ENCODE measurements at regions of chr5 and their contacts with region 1.

Region 1: DNA sequence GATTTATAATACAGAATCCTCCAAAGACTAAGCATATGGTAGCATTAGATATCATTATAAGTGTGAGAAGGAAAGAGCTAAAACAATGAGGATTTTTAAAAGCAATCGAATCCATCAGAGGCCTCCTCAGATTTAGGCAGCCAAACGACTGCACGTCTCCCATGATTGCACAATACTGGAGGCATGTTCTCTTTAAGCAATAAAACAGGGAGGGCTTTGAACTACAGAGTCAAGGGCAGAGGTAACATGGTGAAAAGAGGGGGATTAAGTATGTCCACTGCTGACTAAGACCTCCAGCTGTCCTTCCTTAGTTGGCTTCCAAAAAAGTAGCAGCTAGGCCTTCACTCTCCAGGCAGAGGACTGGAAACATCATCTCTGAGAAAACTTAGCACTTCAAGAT is 298.7 kb upstream of the RGMB start:
- DNase-seq: no peak
- H3K4me3 ChIP-seq: no peak overlapping the region
- H3K27ac ChIP-seq: no peak overlapping the region
- H3K4me1 ChIP-seq: peaks cover 7% of the 10 kb centered on the region; the same call in 1 of the 2 replicates
- H3K27me3 ChIP-seq: no peaks in the 10 kb centered on the region
- CTCF ChIP-seq: no peak

Region 2: GRCh38 chr5:98433673-98434072 is 41.1 kb before region 1 on chr5:
- CTCF ChIA-PET with region 1: no interaction called
- POLR2A ChIA-PET with region 1: no interaction called
- intact Hi-C with region 1: no loop called
- DNase-seq: no peak
- H3K4me3 ChIP-seq: no peak overlapping the region
- H3K27ac ChIP-seq: no peak overlapping the region
- H3K4me1 ChIP-seq: no peaks in the 10 kb centered on the region
- H3K27me3 ChIP-seq: no peaks in the 10 kb centered on the region
- CTCF ChIP-seq: no peak

Region 3: GRCh38 chr5:98524773-98525172 is 50.0 kb after region 1 on chr5:
- CTCF ChIA-PET with region 1: no interaction called
- POLR2A ChIA-PET with region 1: no interaction called
- intact Hi-C with region 1: no loop called
- DNase-seq: no peak
- H3K4me3 ChIP-seq: no peak overlapping the region
- H3K27ac ChIP-seq: no peak overlapping the region
- H3K4me1 ChIP-seq: no peaks in the 10 kb centered on the region
- H3K27me3 ChIP-seq: no peaks in the 10 kb centered on the region
- CTCF ChIP-seq: no peak

Region 4: DNA sequence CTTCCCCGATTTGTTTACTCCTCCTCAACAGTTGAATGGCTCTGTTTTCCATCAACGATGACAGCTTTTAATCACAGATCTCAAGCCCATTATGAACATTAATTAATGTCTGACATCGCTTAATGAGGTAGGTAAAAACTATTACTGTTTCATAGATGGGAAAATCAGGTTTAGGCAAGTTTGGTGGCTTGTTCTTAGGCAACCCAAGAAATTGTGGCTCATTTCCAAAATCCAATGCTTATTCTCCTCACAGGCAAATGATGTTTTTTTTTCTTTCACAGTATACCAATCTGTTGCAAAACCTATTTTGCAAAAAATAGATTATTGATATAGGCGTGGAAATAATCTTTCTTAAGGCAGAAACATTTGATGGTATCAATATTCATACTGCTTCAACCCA is 524.8 kb after region 1 on chr5:
- CTCF ChIA-PET with region 1: interaction called, 10 read pairs
- POLR2A ChIA-PET with region 1: no interaction called
- intact Hi-C with region 1: no loop called
- DNase-seq: no peak
- H3K4me3 ChIP-seq: no peak overlapping the region
- H3K27ac ChIP-seq: no peak overlapping the region
- H3K4me1 ChIP-seq: peaks cover 6% of the 10 kb centered on the region; the same call in 1 of the 2 replicates
- H3K27me3 ChIP-seq: no peaks in the 10 kb centered on the region
- CTCF ChIP-seq: no peak

Measured in PC-9 (cell line).